ENCODE measurements at regions of chr1 and their contacts with region 1.

Region 1: GRCh38 chr1:89198491-89199072 is at the start of gene GBP4:
- DNase-seq: peak; percentile 19 to 83 (median 53)
- ATAC-seq: peak; percentile 60
- H3K4me3 ChIP-seq: peak within 1 kb of the TSS; percentile 75
- H3K4me3 Mint-ChIP-seq: peak within 1 kb of the TSS; percentile 95
- H3K27ac ChIP-seq: peak within 1 kb of the TSS; percentile 64 to 84
- H3K27ac Mint-ChIP-seq: peak within 1 kb of the TSS; percentile 89
- H3K4me1 ChIP-seq: peaks cover 27% of the 10 kb centered on the region
- H3K4me1 Mint-ChIP-seq: peaks cover 85% of the 10 kb centered on the region
- H3K27me3 ChIP-seq: no peaks in the 10 kb centered on the region
- H3K27me3 Mint-ChIP-seq: no peaks in the 10 kb centered on the region
- CTCF ChIP-seq: no peak
- total RNA-seq, gene GBP4: 11.3 to 11.7 TPM

Region 2: DNA sequence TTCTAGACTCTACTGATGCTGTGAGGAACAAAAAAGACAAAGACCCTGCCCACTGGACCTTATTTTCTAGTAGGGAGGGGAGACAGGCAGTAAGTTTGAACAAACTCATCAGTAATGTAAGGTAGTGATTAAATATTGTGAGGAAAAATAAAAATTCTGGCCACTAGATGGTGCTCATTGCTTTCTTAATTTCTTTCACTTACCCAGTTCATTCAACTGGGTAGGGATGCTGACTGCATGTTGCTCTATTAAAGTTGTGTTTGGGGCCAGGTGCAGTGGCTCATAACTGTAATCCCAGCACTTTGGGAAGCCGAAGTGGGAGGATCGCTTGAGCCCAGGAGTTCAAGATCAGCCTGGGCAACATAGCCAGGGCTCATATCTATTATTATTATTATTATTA is 199.9 kb before region 1 on chr1:
- CTCF ChIA-PET with region 1: no interaction called
- POLR2A ChIA-PET with region 1: interaction called, 3 read pairs
- intact Hi-C with region 1: loop called (anchors 5 kb)
- DNase-seq: peak in 4 of 14 experiments; percentile 32 to 85 (median 84)
- ATAC-seq: peak; percentile 88
- H3K4me3 ChIP-seq: no peak overlapping the region
- H3K4me3 Mint-ChIP-seq: peak overlapping the region; percentile 50
- H3K27ac ChIP-seq: no peak overlapping the region
- H3K27ac Mint-ChIP-seq: no peak overlapping the region
- H3K4me1 ChIP-seq: peaks cover 12% of the 10 kb centered on the region
- H3K4me1 Mint-ChIP-seq: peaks cover 40% of the 10 kb centered on the region
- H3K27me3 ChIP-seq: no peaks in the 10 kb centered on the region
- H3K27me3 Mint-ChIP-seq: no peaks in the 10 kb centered on the region
- CTCF ChIP-seq: peak; percentile 64

Region 3: GRCh38 chr1:89125913-89126580 is 72.5 kb before region 1 on chr1 and contains the start of gene GBP2:
- CTCF ChIA-PET with region 1: interaction called, 6 read pairs
- POLR2A ChIA-PET with region 1: interaction called, 79 read pairs
- intact Hi-C with region 1: loop called (anchors 1 to 2 kb)
- DNase-seq: peak in 7 of 14 experiments; percentile 18 to 86 (median 41)
- ATAC-seq: peak; percentile 81
- H3K4me3 ChIP-seq: peak within 1 kb of the TSS; percentile 83
- H3K4me3 Mint-ChIP-seq: peak within 1 kb of the TSS; percentile 100
- H3K27ac ChIP-seq: peak within 1 kb of the TSS; percentile 51 to 86
- H3K27ac Mint-ChIP-seq: peak within 1 kb of the TSS; percentile 96
- H3K4me1 ChIP-seq: peaks cover 23% of the 10 kb centered on the region
- H3K4me1 Mint-ChIP-seq: peaks cover 76% of the 10 kb centered on the region
- H3K27me3 ChIP-seq: no peaks in the 10 kb centered on the region
- H3K27me3 Mint-ChIP-seq: no peaks in the 10 kb centered on the region
- CTCF ChIP-seq: no peak
- total RNA-seq, gene GBP2: 87.6 to 91.8 TPM

Region 4: DNA sequence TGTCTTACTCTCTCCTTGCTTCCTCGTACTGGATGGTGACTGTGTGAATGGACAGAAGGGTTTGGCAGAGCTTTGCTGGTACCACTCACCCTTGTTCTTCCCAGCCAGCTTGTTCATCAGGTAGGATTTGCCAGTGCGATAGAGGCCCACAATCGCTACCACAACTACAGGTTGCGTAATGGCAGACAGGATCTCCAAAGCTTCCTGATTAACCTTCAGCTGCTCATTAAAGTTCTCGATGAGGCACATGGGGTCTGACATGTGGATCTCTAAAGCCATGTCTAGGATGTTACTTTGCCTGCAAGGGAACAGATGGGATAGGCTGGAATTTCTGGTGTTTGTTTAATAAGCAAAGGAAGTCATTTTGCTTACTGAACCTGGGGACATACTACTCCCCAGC is 70.7 kb after region 1 on chr1:
- CTCF ChIA-PET with region 1: interaction called, 10 read pairs
- POLR2A ChIA-PET with region 1: interaction called, 62 read pairs
- intact Hi-C with region 1: loop called (anchors 5 kb)
- DNase-seq: peak in 1 of 14 experiments; percentile 42
- ATAC-seq: no peak
- H3K4me3 ChIP-seq: peak overlapping the region; percentile 71
- H3K4me3 Mint-ChIP-seq: peak overlapping the region; percentile 72
- H3K27ac ChIP-seq: no peak overlapping the region
- H3K27ac Mint-ChIP-seq: peak overlapping the region; percentile 89
- H3K4me1 ChIP-seq: peaks cover 25% of the 10 kb centered on the region
- H3K4me1 Mint-ChIP-seq: peaks cover 71% of the 10 kb centered on the region
- H3K27me3 ChIP-seq: no peaks in the 10 kb centered on the region
- H3K27me3 Mint-ChIP-seq: no peaks in the 10 kb centered on the region
- CTCF ChIP-seq: no peak

Region 5: GRCh38 chr1:89286549-89287180 is 88.1 kb after region 1 on chr1:
- CTCF ChIA-PET with region 1: no interaction called
- POLR2A ChIA-PET with region 1: interaction called, 34 read pairs
- intact Hi-C with region 1: loop called in 1 of 2 experiments (anchors 5 kb)
- DNase-seq: peak in 3 of 14 experiments; percentile 39 to 82 (median 48)
- ATAC-seq: peak; percentile 76
- H3K4me3 ChIP-seq: peak overlapping the region; percentile 28
- H3K4me3 Mint-ChIP-seq: peak overlapping the region; percentile 62
- H3K27ac ChIP-seq: peak overlapping the region; percentile 53 to 54
- H3K27ac Mint-ChIP-seq: peak overlapping the region; percentile 78
- H3K4me1 ChIP-seq: peaks cover 45% of the 10 kb centered on the region
- H3K4me1 Mint-ChIP-seq: peaks cover 61% of the 10 kb centered on the region
- H3K27me3 ChIP-seq: no peaks in the 10 kb centered on the region
- H3K27me3 Mint-ChIP-seq: no peaks in the 10 kb centered on the region
- CTCF ChIP-seq: no peak

Region 6: GRCh38 chr1:89310505-89310904 is 111.9 kb after region 1 on chr1:
- CTCF ChIA-PET with region 1: no interaction called
- POLR2A ChIA-PET with region 1: interaction called, 65 read pairs
- intact Hi-C with region 1: no loop called
- DNase-seq: peak in 3 of 14 experiments; percentile 14 to 80 (median 27)
- ATAC-seq: peak; percentile 52
- H3K4me3 ChIP-seq: peak overlapping the region; percentile 11
- H3K4me3 Mint-ChIP-seq: peak overlapping the region; percentile 47
- H3K27ac ChIP-seq: peak overlapping the region; percentile 24 to 38
- H3K27ac Mint-ChIP-seq: peak overlapping the region; percentile 78
- H3K4me1 ChIP-seq: peaks cover 31% of the 10 kb centered on the region
- H3K4me1 Mint-ChIP-seq: peaks cover 42% of the 10 kb centered on the region
- H3K27me3 ChIP-seq: no peaks in the 10 kb centered on the region
- H3K27me3 Mint-ChIP-seq: no peaks in the 10 kb centered on the region
- CTCF ChIP-seq: no peak

Measured in CD4-positive, alpha-beta T cell (primary cell).